Activated CD4-positive, alpha-beta memory T cell treated with anti-CD3 and anti-CD28 coated beads for 36 hours (primary cell): ENCODE measurements at regions of chr16 and their contacts with region 1.

Region 1: DNA sequence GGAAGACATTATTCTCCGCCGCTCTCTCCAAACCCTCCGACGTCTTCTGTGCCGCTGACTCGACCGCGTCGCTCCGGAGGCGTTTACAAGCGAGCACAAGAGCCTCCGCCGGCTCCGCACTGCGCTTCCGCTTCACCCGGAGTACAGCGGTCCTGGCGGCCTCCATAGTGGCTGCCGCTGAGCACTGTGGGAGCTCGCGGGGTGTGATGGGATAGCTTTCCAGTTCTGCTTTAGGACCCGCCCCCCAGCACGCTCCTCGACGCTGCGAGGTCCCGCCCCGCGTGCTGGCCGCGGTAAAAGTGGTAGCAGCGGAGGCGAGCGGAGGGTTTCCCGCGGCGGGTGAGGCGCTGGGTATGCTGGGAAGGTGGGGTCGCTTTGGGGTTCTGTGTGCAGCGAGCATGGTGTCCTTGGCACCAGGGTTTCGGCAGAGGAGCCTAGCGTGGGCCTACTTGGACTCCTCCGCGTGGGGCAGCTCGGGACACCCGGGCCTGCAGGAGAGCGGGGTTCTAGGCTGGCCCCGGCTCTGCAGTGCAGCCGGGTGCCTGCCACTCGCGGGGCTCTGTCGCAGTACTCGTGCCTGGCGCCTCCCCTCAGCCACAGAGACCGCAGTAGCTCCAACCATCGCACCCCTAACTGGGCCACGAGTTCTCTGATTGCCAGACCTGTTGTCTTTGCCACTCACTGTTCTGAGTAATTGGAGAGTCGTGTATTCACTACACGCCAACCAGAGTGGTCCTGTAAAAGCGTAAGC is at the starts of genes PRMT7 and SLC7A6OS:
- DNase-seq: peak; percentile 96
- H3K4me3 Mint-ChIP-seq: peak within 1 kb of the TSS; percentile 89
- H3K27ac Mint-ChIP-seq: peak within 1 kb of the TSS; percentile 93
- H3K4me1 Mint-ChIP-seq: peaks cover 52% of the 10 kb centered on the region
- H3K27me3 Mint-ChIP-seq: no peaks in the 10 kb centered on the region
- total RNA-seq, gene PRMT7: 60.4 to 62.8 TPM
- total RNA-seq, gene SLC7A6OS: 20.6 to 22.2 TPM

Region 2: DNA sequence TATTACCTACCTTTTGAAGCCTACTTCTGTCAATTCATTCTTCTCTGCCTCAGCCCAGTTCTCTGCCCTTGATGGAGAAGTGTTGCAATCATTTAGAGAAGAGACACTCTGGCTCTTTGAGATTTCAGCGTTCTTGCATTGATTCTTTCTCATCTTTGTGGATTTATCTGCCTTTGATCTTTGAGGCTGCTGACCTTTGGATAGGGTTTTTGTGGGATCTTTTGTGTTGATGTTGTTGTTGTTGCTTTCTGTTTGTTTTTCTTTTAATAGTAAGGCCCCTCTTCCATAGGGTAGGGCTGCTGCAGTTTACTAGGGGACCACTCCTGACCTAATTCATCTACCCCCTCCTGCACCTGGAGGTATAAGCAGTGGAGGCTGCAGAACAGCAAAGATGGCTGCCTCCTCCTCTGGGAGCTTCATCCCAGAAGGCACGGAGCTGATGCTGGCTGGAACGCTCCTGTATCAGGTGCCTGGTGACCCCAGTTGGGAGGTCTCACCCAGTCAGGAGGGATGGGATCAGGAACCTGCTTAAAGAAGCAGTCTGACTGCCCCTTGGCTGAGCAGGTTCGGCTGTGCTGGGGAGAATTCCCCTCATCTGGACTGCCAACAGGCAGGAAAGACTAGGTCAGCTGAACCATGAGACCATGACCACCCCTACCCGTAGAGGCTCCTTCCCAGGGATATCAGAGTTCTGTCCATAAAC is 197.7 kb before region 1 on chr16:
- CTCF ChIA-PET with region 1: no interaction called
- POLR2A ChIA-PET with region 1: no interaction called
- intact Hi-C with region 1: no loop called
- DNase-seq: no peak
- H3K4me3 Mint-ChIP-seq: no peak overlapping the region
- H3K27ac Mint-ChIP-seq: no peak overlapping the region
- H3K4me1 Mint-ChIP-seq: peaks cover 84% of the 10 kb centered on the region
- H3K27me3 Mint-ChIP-seq: no peaks in the 10 kb centered on the region

Region 3: GRCh38 chr16:68244903-68245853 is 65.8 kb before region 1 on chr16 and contains the start of gene PLA2G15:
- CTCF ChIA-PET with region 1: interaction called, 3 read pairs
- POLR2A ChIA-PET with region 1: no interaction called
- intact Hi-C with region 1: loop called (anchors 1 kb)
- DNase-seq: peak; percentile 98
- H3K4me3 Mint-ChIP-seq: peak within 1 kb of the TSS; percentile 89
- H3K27ac Mint-ChIP-seq: peak within 1 kb of the TSS; percentile 34
- H3K4me1 Mint-ChIP-seq: peaks cover 25% of the 10 kb centered on the region
- H3K27me3 Mint-ChIP-seq: no peaks in the 10 kb centered on the region
- total RNA-seq, gene PLA2G15: 8.0 to 8.7 TPM

Region 4: GRCh38 chr16:68843482-68844210 is 532.7 kb after region 1 on chr16 and contains the start of gene TANGO6:
- CTCF ChIA-PET with region 1: no interaction called
- POLR2A ChIA-PET with region 1: no interaction called
- intact Hi-C with region 1: no loop called
- DNase-seq: peak; percentile 96
- H3K4me3 Mint-ChIP-seq: peak within 1 kb of the TSS; percentile 95
- H3K27ac Mint-ChIP-seq: peak within 1 kb of the TSS; percentile 85
- H3K4me1 Mint-ChIP-seq: peaks cover 25% of the 10 kb centered on the region
- H3K27me3 Mint-ChIP-seq: no peaks in the 10 kb centered on the region
- total RNA-seq, gene TANGO6: 25.2 to 25.7 TPM